Activated CD4-positive, alpha-beta memory T cell treated with anti-CD3 and anti-CD28 coated beads, Interleukin-2, amount 10 ng/mL, durations not matched to agents 7 days and 5 days (primary cell): ENCODE measurements at regions of chr2 and their contacts with region 1.

Region 1: GRCh38 chr2:68734688-68735525 is at the start of gene ARHGAP25:
- DNase-seq: peak; percentile 68
- H3K4me3 Mint-ChIP-seq: no peak within 1 kb of the TSS
- H3K27ac Mint-ChIP-seq: no peak within 1 kb of the TSS
- H3K4me1 Mint-ChIP-seq: peaks cover 34% of the 10 kb centered on the region
- H3K27me3 Mint-ChIP-seq: no peaks in the 10 kb centered on the region
- total RNA-seq, gene ARHGAP25: 128 to 132 TPM

Region 2: GRCh38 chr2:68577183-68577582 is 157.7 kb before region 1 on chr2:
- CTCF ChIA-PET with region 1: no interaction called
- POLR2A ChIA-PET with region 1: no interaction called
- DNase-seq: no peak
- H3K4me3 Mint-ChIP-seq: no peak overlapping the region
- H3K27ac Mint-ChIP-seq: no peak overlapping the region
- H3K4me1 Mint-ChIP-seq: no peaks in the 10 kb centered on the region
- H3K27me3 Mint-ChIP-seq: no peaks in the 10 kb centered on the region

Region 3: GRCh38 chr2:68692511-68692910 is 42.4 kb before region 1 on chr2:
- CTCF ChIA-PET with region 1: no interaction called
- POLR2A ChIA-PET with region 1: no interaction called
- DNase-seq: no peak
- H3K4me3 Mint-ChIP-seq: no peak overlapping the region
- H3K27ac Mint-ChIP-seq: no peak overlapping the region
- H3K4me1 Mint-ChIP-seq: peaks cover 21% of the 10 kb centered on the region
- H3K27me3 Mint-ChIP-seq: peaks cover 14% of the 10 kb centered on the region

Region 4: DNA sequence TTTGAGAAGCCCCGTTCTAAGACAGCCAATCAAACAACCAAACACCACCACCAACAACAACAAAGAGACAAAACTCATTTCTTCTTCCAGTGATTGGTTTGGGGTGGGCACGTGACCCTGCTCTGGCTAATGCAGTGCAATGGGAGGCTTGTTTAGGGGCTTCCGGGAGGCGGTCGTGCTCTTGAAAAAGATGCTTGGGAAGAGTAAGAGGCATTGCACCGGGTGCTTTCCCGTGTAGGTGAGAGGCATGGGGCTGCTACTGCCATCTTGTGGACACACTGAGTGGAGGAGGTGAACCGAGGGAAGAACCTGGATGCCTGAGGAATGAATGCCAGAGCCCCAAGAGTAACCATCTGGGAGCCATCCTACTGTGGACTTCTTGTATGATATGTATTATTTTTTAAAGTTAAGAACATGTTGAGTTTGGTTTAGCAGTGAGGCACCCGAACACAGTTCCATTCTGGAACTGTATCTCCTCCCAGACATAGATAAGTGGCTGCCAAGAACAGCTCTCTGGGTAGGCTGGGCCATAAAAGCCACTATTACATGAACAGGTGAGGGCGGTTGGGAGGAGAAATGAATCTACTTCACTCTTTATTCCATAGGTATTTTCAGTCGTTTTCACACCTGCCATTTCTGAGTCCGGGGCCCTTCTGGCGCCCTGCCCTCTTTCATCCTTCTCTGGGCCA is 19.4 kb before region 1 on chr2:
- CTCF ChIA-PET with region 1: interaction called, 35 read pairs
- POLR2A ChIA-PET with region 1: interaction called, 491 read pairs
- DNase-seq: peak; percentile 58
- H3K4me3 Mint-ChIP-seq: no peak overlapping the region
- H3K27ac Mint-ChIP-seq: peak overlapping the region; percentile 89
- H3K4me1 Mint-ChIP-seq: peaks cover 85% of the 10 kb centered on the region
- H3K27me3 Mint-ChIP-seq: peaks cover 1% of the 10 kb centered on the region

Region 5: DNA sequence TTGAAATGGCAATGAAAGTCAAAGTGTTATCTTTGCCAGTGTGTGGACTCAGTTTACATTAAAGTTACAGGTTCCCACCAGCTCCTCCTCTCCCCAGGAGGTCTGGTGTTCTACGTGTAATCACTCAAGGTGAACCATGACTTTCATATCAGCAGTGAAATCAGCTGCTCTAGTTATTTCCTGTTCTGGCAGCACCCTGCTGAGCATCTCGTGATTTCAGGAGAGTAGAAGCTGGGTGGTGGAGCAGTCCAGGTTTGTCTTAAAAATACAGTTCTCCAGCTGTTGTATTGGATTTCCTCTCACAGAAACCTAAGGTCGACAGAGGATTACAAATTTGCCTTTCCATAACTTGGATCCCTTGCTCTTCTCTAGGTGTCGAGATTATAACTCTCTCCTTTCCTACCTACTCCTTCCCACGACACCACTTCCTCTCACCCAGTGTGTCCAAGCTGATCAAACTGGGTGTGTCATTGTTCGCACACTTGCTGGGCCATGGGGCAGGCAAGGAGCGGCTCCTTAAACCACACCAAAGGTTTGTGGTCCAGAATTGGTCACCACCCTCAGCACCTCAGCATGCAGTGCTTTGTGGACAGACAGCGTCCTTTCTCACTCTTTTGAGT is 13.3 kb before region 1 on chr2:
- CTCF ChIA-PET with region 1: interaction called, 31 read pairs
- POLR2A ChIA-PET with region 1: interaction called, 491 read pairs
- DNase-seq: peak; percentile 67
- H3K4me3 Mint-ChIP-seq: peak overlapping the region; percentile 58
- H3K27ac Mint-ChIP-seq: peak overlapping the region; percentile 95
- H3K4me1 Mint-ChIP-seq: peaks cover 99% of the 10 kb centered on the region
- H3K27me3 Mint-ChIP-seq: no peaks in the 10 kb centered on the region

Region 6: GRCh38 chr2:68774569-68775271 is 39.8 kb after region 1 on chr2:
- CTCF ChIA-PET with region 1: no interaction called
- POLR2A ChIA-PET with region 1: interaction called, 356 read pairs
- DNase-seq: peak; percentile 77
- H3K4me3 Mint-ChIP-seq: peak overlapping the region; percentile 80
- H3K27ac Mint-ChIP-seq: peak overlapping the region; percentile 97
- H3K4me1 Mint-ChIP-seq: peaks cover 87% of the 10 kb centered on the region
- H3K27me3 Mint-ChIP-seq: no peaks in the 10 kb centered on the region